ENCODE measurements at regions of chr14 and their contacts with region 1.

Region 1: GRCh38 chr14:49867831-49868723 is 15.5 kb upstream of the NEMF start:
- DNase-seq: peak; percentile 96 to 99
- ATAC-seq: peak; percentile 92 to 93
- H3K4me3 ChIP-seq: peak overlapping the region; percentile 55 to 86 (median 68)
- H3K27ac ChIP-seq: peak overlapping the region; percentile 90 to 97 (median 94)
- H3K4me1 ChIP-seq: peaks cover 6 to 11% of the 10 kb centered on the region in 2 donors
- H3K27me3 ChIP-seq: no peaks in the 10 kb centered on the region
- CTCF ChIP-seq: peak in 1 of 5 experiments; percentile 33
- POLR2A ChIP-seq: peak; percentile 70 to 84

Region 2: DNA sequence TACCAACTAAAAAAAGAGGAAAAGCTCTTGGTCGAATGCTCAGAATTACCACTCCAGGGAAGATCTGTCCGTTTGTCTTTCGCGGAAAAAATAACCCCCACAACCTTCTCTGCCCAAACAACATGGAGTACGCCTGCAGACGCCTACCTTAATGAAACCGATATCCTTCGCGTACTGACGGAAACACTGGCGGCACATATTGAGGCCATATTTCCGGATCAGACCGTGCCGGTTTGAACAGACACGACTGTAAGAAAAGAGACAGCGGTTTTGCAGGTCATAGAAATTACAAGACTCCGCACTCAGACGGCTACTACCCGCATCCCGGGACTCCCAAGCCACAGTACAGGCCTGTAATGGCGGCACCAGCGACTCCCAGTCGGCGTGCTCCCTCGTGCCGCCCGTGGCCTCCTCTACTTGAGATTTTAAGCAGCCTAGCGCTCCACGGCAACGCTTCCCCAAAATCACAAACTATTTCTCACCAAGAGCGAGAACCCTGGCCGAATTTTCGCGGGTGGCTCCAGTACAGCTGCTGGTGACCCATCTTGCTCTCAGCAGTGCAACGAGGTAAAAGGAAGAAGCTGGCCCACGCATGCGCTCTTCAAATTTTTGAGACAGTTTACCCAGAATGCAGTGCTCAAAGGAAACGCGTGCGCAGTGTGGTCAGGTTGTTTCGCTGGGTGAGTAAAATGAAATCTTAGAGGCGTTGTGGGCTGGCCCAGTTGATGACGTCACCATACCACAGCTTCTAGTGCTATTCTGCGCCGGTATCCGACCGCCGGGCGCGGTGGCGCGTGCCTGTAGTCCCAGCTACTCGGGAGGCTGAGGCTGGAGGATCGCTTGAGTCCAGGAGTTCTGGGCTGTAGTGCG is 282.0 kb before region 1 on chr14 and contains the start of gene RPS29:
- in situ Hi-C with region 1: no loop called
- intact Hi-C with region 1: no loop called
- DNase-seq: peak; percentile 97 to 98
- ATAC-seq: peak; percentile 99
- H3K4me3 ChIP-seq: peak within 1 kb of the TSS; percentile 78 to 99 (median 93)
- H3K27ac ChIP-seq: peak within 1 kb of the TSS; percentile 94 to 98 (median 96)
- H3K4me1 ChIP-seq: peaks cover 27 to 29% of the 10 kb centered on the region in 2 donors
- H3K27me3 ChIP-seq: no peaks in the 10 kb centered on the region
- CTCF ChIP-seq: no peak
- POLR2A ChIP-seq: peak; percentile 94 to 96
- total RNA-seq, gene RPS29: 6,799 to 10,395 (median 8,793) TPM

Region 3: DNA sequence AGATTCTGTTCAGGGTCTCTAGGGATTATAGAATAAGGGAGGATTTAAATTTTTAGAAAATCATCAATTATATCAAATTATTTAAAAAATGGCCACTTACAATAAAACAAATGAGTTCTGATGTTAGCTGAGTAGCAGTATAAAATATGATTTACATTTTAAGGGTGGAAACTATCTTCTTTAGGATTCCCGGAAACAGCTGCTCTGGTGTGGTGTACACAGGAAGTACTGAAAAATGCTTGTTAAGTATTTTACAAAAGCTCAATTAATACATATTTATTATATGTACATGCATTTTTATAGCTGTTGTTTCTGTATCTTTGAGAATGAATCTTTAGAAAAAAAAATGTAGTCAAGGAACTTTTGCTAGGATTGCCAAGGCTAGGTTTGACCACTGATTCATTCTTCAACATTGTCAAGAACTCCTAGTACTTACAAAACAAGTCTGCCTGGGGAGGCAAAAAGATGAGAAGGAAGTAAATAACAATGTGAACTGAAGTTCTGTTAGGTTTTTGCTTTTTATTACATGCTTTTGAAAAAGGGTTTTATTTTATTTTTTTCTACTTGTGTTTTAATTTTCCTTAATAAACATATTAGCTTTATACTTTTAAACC is 72.8 kb after region 1 on chr14:
- in situ Hi-C with region 1: no loop called
- intact Hi-C with region 1: no loop called
- DNase-seq: no peak
- ATAC-seq: no peak
- H3K4me3 ChIP-seq: no peak overlapping the region
- H3K27ac ChIP-seq: no peak overlapping the region
- H3K4me1 ChIP-seq: no peaks in the 10 kb centered on the region
- H3K27me3 ChIP-seq: no peaks in the 10 kb centered on the region
- CTCF ChIP-seq: no peak
- POLR2A ChIP-seq: no peak

Region 4: GRCh38 chr14:50003213-50004031 is 135.3 kb after region 1 on chr14:
- in situ Hi-C with region 1: loop called in 1 of 4 experiments (anchors 10 kb)
- intact Hi-C with region 1: loop called (anchors 2 kb)
- DNase-seq: peak; percentile 65 to 76
- ATAC-seq: peak in 1 of 2 donors; percentile 5
- H3K4me3 ChIP-seq: peak overlapping the region; percentile 56 to 72 (median 64)
- H3K27ac ChIP-seq: peak overlapping the region; percentile 93 to 97 (median 94)
- H3K4me1 ChIP-seq: peaks cover 43 to 49% of the 10 kb centered on the region in 2 donors
- H3K27me3 ChIP-seq: no peaks in the 10 kb centered on the region
- CTCF ChIP-seq: peak in 4 of 5 experiments; percentile 16 to 29 (median 20)
- POLR2A ChIP-seq: peak in 1 of 2 donors; percentile 64

Region 5: GRCh38 chr14:50109342-50109741 is 241.3 kb after region 1 on chr14:
- in situ Hi-C with region 1: loop called in 3 of 4 experiments (anchors 5 to 10 kb)
- intact Hi-C with region 1: loop called (anchors 1 kb)
- DNase-seq: no peak
- ATAC-seq: no peak
- H3K4me3 ChIP-seq: no peak overlapping the region
- H3K27ac ChIP-seq: no peak overlapping the region
- H3K4me1 ChIP-seq: peaks cover 0 to 6% of the 10 kb centered on the region in 2 donors
- H3K27me3 ChIP-seq: no peaks in the 10 kb centered on the region
- CTCF ChIP-seq: no peak
- POLR2A ChIP-seq: no peak

Region 6: GRCh38 chr14:50225067-50225973 is 357.2 kb after region 1 on chr14:
- in situ Hi-C with region 1: loop called in 2 of 4 experiments (anchors 10 kb)
- intact Hi-C with region 1: loop called (anchors 5 kb)
- DNase-seq: no peak
- ATAC-seq: peak; percentile 92 to 93
- H3K4me3 ChIP-seq: peak overlapping the region in 3 of 4 donors; percentile 3 to 22 (median 18)
- H3K27ac ChIP-seq: peak overlapping the region; percentile 48 to 81 (median 70)
- H3K4me1 ChIP-seq: peaks cover 68 to 85% of the 10 kb centered on the region in 2 donors
- H3K27me3 ChIP-seq: no peaks in the 10 kb centered on the region
- CTCF ChIP-seq: no peak
- POLR2A ChIP-seq: no peak

Region 7: DNA sequence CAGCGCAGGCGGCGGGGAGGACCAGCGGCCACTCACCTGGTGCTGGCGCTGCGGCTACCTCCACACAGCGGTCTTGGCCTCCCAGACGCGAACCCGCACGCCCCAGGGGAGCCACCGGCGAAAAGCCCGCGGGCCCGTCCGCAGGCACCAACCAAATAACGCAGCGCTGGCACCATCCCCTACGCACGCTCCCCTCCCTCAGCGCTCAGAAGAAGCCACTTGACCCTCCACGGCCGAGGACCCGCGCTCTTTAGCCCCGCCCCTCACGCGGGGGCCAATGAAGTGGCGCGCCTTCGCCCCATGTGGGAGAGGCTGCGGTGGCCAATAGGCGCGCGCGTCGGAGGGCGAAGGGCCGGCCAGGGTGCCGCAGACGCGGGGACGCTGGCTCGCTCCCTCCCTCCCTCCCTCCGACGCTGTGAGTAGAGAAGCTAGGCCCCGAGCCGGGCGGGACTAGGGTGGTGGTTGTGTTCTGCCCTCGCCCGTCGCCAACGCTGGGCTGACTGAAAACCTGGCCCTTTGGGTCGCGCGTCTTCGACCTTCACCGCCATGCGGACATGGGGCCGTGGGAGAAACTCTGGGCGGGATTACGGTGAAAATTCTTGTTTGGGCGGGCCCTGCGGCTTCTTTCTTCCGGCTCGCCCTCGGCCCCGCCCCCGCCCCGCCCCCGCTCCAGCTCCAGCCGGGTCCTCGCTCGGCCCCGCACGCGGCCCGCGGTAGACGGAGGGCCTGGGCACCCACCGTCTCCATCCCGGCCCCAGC is 444.1 kb after region 1 on chr14 and contains the starts of genes DMAC2L and L2HGDH:
- in situ Hi-C with region 1: no loop called
- intact Hi-C with region 1: loop called (anchors 10 kb)
- DNase-seq: peak; percentile 85 to 92
- ATAC-seq: peak; percentile 91 to 95
- H3K4me3 ChIP-seq: peak within 1 kb of the TSS; percentile 61 to 92 (median 86)
- H3K27ac ChIP-seq: peak within 1 kb of the TSS; percentile 94 to 98 (median 96)
- H3K4me1 ChIP-seq: peaks cover 18% of the 10 kb centered on the region in 2 donors
- H3K27me3 ChIP-seq: no peaks in the 10 kb centered on the region
- CTCF ChIP-seq: peak in 3 of 5 experiments; percentile 10 to 78 (median 34)
- POLR2A ChIP-seq: peak; percentile 79 to 83
- total RNA-seq, gene DMAC2L: 18.6 to 42.2 (median 24.6) TPM
- total RNA-seq, gene L2HGDH: 8.6 to 13.4 (median 10.9) TPM

Region 8: GRCh38 chr14:50773632-50774541 is 905.8 kb after region 1 on chr14:
- in situ Hi-C with region 1: no loop called
- intact Hi-C with region 1: loop called (anchors 10 kb)
- DNase-seq: peak in 1 of 2 donors; percentile 53
- ATAC-seq: peak; percentile 48 to 74
- H3K4me3 ChIP-seq: no peak overlapping the region
- H3K27ac ChIP-seq: peak overlapping the region in 3 of 4 donors; percentile 70 to 79 (median 79)
- H3K4me1 ChIP-seq: peaks cover 17 to 37% of the 10 kb centered on the region in 2 donors
- H3K27me3 ChIP-seq: no peaks in the 10 kb centered on the region
- CTCF ChIP-seq: peak; percentile 58 to 87 (median 79)
- POLR2A ChIP-seq: no peak